ENCODE measurements at regions of chr12 and their contacts with region 1.

Region 1: DNA sequence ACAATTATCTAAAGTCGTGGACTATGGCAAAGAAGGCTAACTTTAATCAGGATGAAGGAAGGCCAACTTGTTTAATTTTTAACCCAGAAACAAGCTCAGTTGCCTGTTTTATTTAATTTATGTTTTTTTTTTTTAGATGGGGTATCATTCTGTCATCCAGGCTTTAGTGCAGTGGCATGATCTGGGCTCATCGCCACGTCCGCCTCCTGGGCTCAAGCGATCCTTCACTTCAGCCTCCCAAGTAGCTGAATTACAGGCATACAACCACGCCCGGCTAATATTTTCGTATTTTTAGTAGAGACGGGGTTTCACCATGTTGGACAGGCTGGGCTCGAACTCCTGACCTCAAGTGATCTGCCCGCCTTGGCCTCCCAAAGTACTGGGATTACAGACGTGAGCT is 19.7 kb downstream of the NUDT4 start:
- DNase-seq: no peak
- H3K4me3 ChIP-seq: no peak overlapping the region
- H3K27ac ChIP-seq: no peak overlapping the region
- H3K4me1 ChIP-seq: peaks cover 0 to 4% of the 10 kb centered on the region in 2 donors
- H3K27me3 ChIP-seq: no peaks in the 10 kb centered on the region
- CTCF ChIP-seq: no peak

Region 2: GRCh38 chr12:92987362-92987761 is 410.1 kb before region 1 on chr12:
- intact Hi-C with region 1: loop called (anchors 2 kb)
- DNase-seq: no peak
- H3K4me3 ChIP-seq: no peak overlapping the region
- H3K27ac ChIP-seq: peak overlapping the region; percentile 46 to 50
- H3K4me1 ChIP-seq: peaks cover 0 to 4% of the 10 kb centered on the region in 2 donors
- H3K27me3 ChIP-seq: no peaks in the 10 kb centered on the region
- CTCF ChIP-seq: peak; percentile 35 to 66 (median 44)

Region 3: DNA sequence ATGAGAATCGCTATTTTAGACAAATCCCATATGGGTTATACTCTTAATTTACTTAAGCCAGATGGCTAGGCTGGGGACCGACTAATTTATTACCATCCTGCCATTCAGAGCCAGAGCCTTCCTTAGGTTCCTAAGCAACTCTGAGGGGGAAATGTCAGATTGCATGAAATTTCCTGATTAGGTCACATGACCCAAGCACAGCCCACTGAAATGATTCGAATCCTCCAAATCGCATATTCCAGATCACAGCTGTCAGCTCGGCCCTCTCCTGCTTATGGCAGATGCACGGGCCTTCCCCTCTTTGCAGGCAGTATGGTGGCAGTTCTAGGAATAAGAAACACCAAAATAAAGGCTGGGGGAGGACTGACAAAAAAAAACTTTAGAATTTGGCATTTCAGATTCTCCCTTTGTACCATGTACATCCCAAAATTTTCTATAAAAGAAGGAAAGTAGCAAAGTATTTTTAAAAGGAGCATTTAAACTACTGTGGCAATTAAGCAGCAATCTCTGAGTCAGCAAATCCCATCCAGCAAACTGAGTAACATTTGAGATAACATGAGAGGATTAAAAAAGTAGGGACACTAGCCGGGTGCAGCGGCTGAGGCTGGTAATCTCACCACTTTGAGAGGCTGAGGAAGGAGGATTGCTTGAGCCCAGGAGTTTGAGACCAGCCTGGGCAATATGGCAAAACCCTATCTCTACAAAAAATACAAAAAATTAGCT is 50.2 kb before region 1 on chr12:
- intact Hi-C with region 1: loop called (anchors 5 kb)
- DNase-seq: no peak
- H3K4me3 ChIP-seq: no peak overlapping the region
- H3K27ac ChIP-seq: peak overlapping the region in 1 of 2 donors; percentile 83
- H3K4me1 ChIP-seq: peaks cover 0 to 10% of the 10 kb centered on the region in 2 donors
- H3K27me3 ChIP-seq: no peaks in the 10 kb centered on the region
- CTCF ChIP-seq: no peak

Region 4: DNA sequence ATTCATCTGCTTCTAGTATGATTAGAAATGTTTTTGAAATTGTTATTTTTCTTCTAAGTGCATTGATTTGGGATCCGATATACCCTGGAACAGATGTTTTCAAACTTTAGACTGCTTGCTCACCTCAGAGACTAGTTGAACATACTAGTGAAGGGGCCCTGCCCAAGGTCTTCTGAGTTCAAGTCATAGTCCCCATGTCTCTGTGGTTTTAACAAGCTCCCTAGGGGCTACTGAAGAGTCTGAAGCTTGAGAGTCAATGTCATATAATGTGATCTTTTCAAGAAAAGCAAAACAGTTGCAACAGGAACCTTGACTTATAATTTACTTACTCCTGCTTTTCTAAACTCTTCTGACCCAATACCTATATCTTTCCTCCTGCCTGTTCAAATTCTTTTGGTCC is 51.9 kb after region 1 on chr12:
- intact Hi-C with region 1: no loop called
- DNase-seq: no peak
- H3K4me3 ChIP-seq: no peak overlapping the region
- H3K27ac ChIP-seq: no peak overlapping the region
- H3K4me1 ChIP-seq: no peaks in the 10 kb centered on the region
- H3K27me3 ChIP-seq: no peaks in the 10 kb centered on the region
- CTCF ChIP-seq: no peak